ENCODE measurements at regions of chr7 and their contacts with region 1.

Region 1: DNA sequence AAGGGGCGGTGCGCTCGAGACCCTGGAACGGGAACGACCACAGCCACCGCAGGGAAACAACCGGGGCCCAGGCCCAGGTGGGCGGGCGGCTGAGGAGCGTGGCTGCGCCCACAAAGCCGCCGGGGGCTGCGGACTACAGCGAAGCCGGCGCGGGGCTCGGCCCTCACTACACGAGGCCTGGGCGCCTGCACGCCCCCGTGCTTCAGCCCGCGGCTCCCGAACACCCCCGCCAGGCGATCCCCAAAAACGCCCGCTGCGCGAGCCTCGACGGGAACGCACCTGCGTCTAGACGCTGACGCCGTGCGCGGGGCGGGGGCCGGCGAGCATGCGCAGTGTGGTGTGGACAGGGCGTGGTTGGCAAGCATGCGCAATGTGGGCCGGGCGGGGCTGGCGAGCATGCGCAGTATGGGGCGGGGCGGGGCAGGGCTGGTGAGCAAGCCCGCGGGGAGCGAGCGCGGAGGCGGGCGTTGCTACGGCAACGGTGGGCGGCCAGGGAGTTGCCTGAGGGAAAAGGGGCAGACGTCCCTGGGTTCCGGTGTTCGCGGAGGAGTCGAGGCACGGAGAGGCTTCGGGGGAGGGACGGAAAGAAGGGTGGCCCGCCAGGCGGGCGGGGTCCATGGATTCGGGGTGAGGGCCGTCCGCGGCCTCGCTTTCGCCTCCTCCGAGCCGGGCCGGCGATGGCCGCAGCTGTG is at the start of gene RNF32:
- DNase-seq: peak; percentile 95
- H3K4me3 Mint-ChIP-seq: peak within 1 kb of the TSS; percentile 93
- H3K27ac Mint-ChIP-seq: peak within 1 kb of the TSS; percentile 99
- H3K4me1 Mint-ChIP-seq: peaks cover 53% of the 10 kb centered on the region
- H3K27me3 Mint-ChIP-seq: peaks cover 6% of the 10 kb centered on the region
- total RNA-seq, gene RNF32: 2.1 and 2.2 TPM in 2 replicates

Region 2: GRCh38 chr7:156347132-156347531 is 293.3 kb before region 1 on chr7:
- intact Hi-C with region 1: no loop called
- DNase-seq: no peak
- H3K4me3 Mint-ChIP-seq: no peak overlapping the region
- H3K27ac Mint-ChIP-seq: no peak overlapping the region
- H3K4me1 Mint-ChIP-seq: no peaks in the 10 kb centered on the region
- H3K27me3 Mint-ChIP-seq: no peaks in the 10 kb centered on the region

Region 3: DNA sequence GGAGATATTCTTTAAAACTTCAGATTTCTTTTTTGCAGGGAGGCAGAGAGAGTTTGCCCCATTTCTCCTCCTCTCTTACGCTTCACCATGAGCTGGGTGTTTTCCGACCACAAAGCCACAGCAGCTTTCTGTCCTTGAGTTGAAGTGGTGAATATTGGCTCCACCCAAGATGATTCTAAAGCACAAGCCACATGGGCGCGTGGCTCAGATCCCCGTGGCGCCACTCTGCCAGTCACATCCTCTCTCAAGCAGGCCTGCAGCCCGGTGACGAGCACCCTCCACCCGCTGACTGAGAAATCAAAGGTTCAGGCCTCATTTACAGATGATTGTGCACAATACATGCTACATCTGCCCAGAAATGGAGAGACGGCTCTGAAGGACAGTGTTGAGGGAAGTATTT is 27.5 kb before region 1 on chr7:
- intact Hi-C with region 1: loop called (anchors 1 kb)
- DNase-seq: peak; percentile 82
- H3K4me3 Mint-ChIP-seq: peak overlapping the region; percentile 63
- H3K27ac Mint-ChIP-seq: peak overlapping the region; percentile 25
- H3K4me1 Mint-ChIP-seq: peaks cover 37% of the 10 kb centered on the region
- H3K27me3 Mint-ChIP-seq: peaks cover 56% of the 10 kb centered on the region

Region 4: GRCh38 chr7:156751319-156751718 is 110.9 kb after region 1 on chr7:
- intact Hi-C with region 1: loop called (anchors 1 kb)
- DNase-seq: peak; percentile 44
- H3K4me3 Mint-ChIP-seq: peak overlapping the region; percentile 16
- H3K27ac Mint-ChIP-seq: no peak overlapping the region
- H3K4me1 Mint-ChIP-seq: peaks cover 16% of the 10 kb centered on the region
- H3K27me3 Mint-ChIP-seq: no peaks in the 10 kb centered on the region

Region 5: GRCh38 chr7:156892821-156893706 is 252.7 kb after region 1 on chr7 and contains the start of gene LMBR1:
- intact Hi-C with region 1: loop called (anchors 1 kb)
- DNase-seq: peak; percentile 92
- H3K4me3 Mint-ChIP-seq: peak within 1 kb of the TSS; percentile 95
- H3K27ac Mint-ChIP-seq: peak within 1 kb of the TSS; percentile 93
- H3K4me1 Mint-ChIP-seq: peaks cover 43% of the 10 kb centered on the region
- H3K27me3 Mint-ChIP-seq: no peaks in the 10 kb centered on the region
- total RNA-seq, gene LMBR1: 53.5 and 55.5 TPM in 2 replicates

Region 6: GRCh38 chr7:157138424-157139110 is 498.2 kb after region 1 on chr7 and contains the start of gene UBE3C:
- intact Hi-C with region 1: loop called (anchors 2 kb)
- DNase-seq: peak; percentile 89
- H3K4me3 Mint-ChIP-seq: peak within 1 kb of the TSS; percentile 88
- H3K27ac Mint-ChIP-seq: peak within 1 kb of the TSS; percentile 97
- H3K4me1 Mint-ChIP-seq: peaks cover 41% of the 10 kb centered on the region
- H3K27me3 Mint-ChIP-seq: no peaks in the 10 kb centered on the region
- total RNA-seq, gene UBE3C: 91.5 and 95.8 TPM in 2 replicates

Measured in activated T-helper 1 cell treated with anti-CD3 and anti-CD28 coated beads, Interleukin-12 subunit alpha, Interleukin-12 subunit beta, Interleukin-2, Interleukin-4 antibody, amounts not matched to agents 30 ng/mL and 10 ng/mL and 1 ng/mL, durations not matched to agents 14 hours and 24 hours and 36 hours (primary cell).